Lower leg skin (tissue), 4 donors: ENCODE measurements at regions of chr1 and their contacts with region 1.

Region 1: DNA sequence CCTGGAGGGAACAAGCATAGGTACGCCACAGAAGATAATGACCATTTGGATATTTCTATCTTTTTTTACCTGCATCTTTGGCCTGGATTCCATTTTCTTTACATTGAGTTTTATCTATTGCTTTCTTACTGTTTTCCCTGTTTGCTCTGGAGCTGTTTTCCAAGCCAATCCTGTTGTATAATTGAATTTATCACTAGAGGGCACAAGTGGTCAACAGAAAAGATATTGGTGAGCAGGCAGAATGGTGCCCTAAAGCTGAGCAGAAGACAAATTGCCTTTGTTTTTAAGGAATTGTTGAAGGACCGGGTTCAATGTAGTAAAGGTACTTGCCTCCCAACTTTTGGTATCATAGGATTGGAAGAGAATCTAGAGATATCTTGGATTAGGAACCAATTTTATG is 152.8 kb downstream of the PPP1R12B start:
- DNase-seq: no peak
- H3K4me3 ChIP-seq: no peak overlapping the region
- CTCF ChIP-seq: no peak
- POLR2A ChIP-seq: no peak

Region 2: GRCh38 chr1:202599677-202600431 is 98.6 kb after region 1 on chr1:
- intact Hi-C with region 1: loop called (anchors 10 kb)
- DNase-seq: peak; percentile 45 to 90
- H3K4me3 ChIP-seq: no peak overlapping the region
- CTCF ChIP-seq: no peak
- POLR2A ChIP-seq: no peak